OCI-LY7 (cell line): ENCODE measurements at regions of chr11 and their contacts with region 1.

Region 1: GRCh38 chr11:57741132-57742086 is at the start of gene SELENOH:
- DNase-seq: peak; percentile 97
- H3K4me3 ChIP-seq: peak within 1 kb of the TSS; percentile 97
- H3K27ac ChIP-seq: peak within 1 kb of the TSS; percentile 77
- H3K4me1 ChIP-seq: peaks cover 20% of the 10 kb centered on the region
- CTCF ChIP-seq: no peak
- total RNA-seq, gene SELENOH: 181 and 229 TPM in 2 replicates

Region 2: GRCh38 chr11:57335343-57336110 is 405.9 kb before region 1 on chr11 and contains the start of gene SSRP1:
- CTCF ChIA-PET with region 1: no interaction called
- POLR2A ChIA-PET with region 1: no interaction called
- intact Hi-C with region 1: loop called (anchors 5 kb)
- DNase-seq: peak; percentile 95
- H3K4me3 ChIP-seq: peak within 1 kb of the TSS; percentile 76
- H3K27ac ChIP-seq: peak within 1 kb of the TSS; percentile 53
- H3K4me1 ChIP-seq: peaks cover 25% of the 10 kb centered on the region
- CTCF ChIP-seq: peak; percentile 31; the same call in 1 of the 2 replicates
- total RNA-seq, gene SSRP1: 146 and 185 TPM in 2 replicates

Region 3: GRCh38 chr11:57604296-57605027 is 136.9 kb before region 1 on chr11:
- CTCF ChIA-PET with region 1: no interaction called
- POLR2A ChIA-PET with region 1: no interaction called
- intact Hi-C with region 1: no loop called
- DNase-seq: peak; percentile 5
- H3K4me3 ChIP-seq: no peak overlapping the region
- H3K27ac ChIP-seq: no peak overlapping the region
- H3K4me1 ChIP-seq: no peaks in the 10 kb centered on the region
- CTCF ChIP-seq: no peak

Region 4: DNA sequence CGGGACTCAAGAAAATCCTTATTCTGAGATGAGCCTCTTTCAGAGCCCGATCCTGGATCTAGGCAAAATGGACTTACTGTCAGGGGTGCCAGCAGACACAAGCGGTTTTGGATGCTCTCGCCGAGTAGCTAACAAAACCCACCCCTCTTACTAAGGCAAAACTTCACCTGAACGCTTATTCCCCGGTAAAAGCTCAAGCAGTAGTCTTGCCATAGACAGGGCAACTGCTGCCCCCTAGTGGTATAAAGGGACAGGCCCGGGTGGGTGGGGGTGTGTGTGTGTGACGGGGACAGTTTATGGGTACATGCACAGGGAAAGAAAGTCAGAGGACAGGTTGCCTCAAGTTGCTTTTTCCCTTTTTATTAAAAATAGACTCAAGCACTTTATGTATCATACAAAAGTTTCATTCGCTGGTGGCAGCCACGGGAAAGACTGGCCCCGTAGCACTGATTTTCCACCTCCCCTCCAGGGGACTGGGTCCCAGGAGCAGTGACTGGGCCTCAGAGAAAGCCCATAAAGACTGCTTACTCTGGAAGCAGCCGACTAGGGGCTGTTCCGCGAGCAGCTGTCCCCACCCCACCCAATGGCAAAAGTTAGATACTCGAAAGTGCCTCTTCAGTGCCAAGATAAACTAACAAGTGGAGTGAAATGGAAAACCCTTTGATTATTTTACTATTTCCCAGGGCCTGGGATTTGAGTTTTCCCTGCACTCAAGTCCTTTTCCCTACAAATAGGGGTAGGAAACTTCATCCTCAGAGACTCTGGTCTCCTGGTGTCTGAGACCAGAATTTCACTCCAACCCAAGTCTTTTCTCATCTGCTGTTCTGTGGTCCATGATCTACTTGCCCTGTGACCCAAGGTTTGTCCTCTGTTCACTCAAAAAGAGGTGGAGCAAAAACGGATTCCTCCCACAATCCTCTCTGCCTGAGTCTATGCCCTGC is 96.4 kb before region 1 on chr11:
- CTCF ChIA-PET with region 1: no interaction called
- POLR2A ChIA-PET with region 1: no interaction called
- intact Hi-C with region 1: no loop called
- DNase-seq: peak; percentile 86
- H3K4me3 ChIP-seq: no peak overlapping the region
- H3K27ac ChIP-seq: no peak overlapping the region
- H3K4me1 ChIP-seq: peaks cover 38% of the 10 kb centered on the region
- CTCF ChIP-seq: peak; percentile 97

Region 5: DNA sequence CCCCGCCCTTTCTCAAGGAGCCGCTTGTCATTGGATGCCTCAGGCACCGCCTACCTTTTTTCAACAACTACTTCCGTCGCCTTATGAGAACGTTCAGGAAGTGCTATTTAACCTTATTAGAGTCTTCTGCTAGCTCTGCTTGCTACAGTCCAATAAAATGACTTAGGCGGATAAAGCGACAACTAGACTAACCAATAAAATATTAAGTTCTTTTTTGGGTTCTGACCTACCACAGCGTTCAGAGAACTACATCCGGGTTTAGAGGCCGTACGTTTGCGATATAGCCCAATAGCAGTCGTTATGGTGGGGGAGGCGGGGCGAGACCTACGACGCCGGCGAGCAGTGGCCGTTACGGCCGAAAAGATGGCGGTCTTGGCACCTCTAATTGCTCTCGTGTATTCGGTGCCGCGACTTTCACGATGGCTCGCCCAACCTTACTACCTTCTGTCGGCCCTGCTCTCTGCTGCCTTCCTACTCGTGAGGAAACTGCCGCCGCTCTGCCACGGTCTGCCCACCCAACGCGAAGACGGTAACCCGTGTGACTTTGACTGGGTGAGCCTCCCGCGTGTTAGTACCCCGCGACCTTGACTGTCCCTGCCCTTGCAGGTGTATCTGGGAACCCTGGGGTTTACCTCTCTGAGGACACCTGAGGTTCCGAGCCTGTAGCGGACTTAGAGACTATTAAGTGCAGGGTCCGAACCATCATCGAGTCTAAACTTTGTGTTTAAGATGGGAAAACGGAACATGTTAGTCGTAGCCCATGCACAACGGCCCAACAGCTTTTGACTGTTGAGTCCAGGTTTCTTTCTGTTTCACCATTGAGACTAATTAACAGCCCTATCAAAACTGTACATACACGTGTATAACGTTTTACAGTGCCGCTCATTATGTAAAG is 28.9 kb before region 1 on chr11 and contains the start of gene TMX2:
- CTCF ChIA-PET with region 1: no interaction called
- POLR2A ChIA-PET with region 1: interaction called, 4 read pairs
- intact Hi-C with region 1: loop called (anchors 1 kb)
- DNase-seq: peak; percentile 98
- H3K4me3 ChIP-seq: peak within 1 kb of the TSS; percentile 89
- H3K27ac ChIP-seq: peak within 1 kb of the TSS; percentile 82
- H3K4me1 ChIP-seq: peaks cover 28% of the 10 kb centered on the region
- CTCF ChIP-seq: no peak
- total RNA-seq, gene TMX2: 53.3 and 54.9 TPM in 2 replicates

Region 6: DNA sequence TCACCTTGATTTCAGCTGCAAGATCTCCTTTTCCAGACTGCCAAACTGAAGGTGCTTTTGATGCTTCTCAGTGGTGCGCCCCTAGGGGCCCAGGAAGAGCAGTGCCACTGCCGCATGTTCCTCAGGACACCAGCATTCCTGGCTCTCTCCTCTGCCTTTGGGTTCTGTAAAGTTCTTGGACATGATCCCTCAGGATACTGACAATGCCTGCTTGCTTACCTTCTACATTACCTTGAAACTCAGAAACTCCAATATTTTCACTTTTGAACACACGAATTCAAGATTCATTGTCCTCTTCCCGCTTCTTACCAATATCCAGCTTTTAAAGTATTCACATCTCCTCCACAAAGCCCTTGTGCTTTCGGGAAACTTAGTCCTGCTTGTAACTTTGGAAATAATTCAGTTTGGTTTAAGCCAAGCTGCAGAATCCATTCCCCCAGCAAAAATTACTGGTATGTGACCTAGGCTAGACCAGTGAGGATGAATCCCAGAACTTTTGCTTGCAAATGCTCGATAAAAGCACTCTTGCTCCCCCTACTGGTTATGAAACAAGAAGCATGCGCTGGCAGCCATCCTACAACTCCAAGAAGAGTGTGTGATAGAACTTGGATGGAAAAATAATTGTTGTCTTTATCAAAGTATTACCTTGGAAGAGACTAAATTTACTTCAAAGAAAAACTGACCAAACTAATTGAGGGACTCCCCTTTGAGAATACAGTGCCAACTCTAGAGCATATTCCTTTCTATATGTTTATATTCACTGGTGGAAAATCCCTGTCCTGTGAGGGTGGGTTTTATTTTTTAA is 783.0 kb after region 1 on chr11:
- CTCF ChIA-PET with region 1: no interaction called
- POLR2A ChIA-PET with region 1: no interaction called
- intact Hi-C with region 1: loop called (anchors 10 kb)
- DNase-seq: peak; percentile 81
- H3K4me3 ChIP-seq: peak overlapping the region; percentile 22
- H3K27ac ChIP-seq: peak overlapping the region; percentile 85
- H3K4me1 ChIP-seq: peaks cover 39% of the 10 kb centered on the region
- CTCF ChIP-seq: peak; percentile 98